ENCODE measurements at regions of chr2 and their contacts with region 1.

Region 1: DNA sequence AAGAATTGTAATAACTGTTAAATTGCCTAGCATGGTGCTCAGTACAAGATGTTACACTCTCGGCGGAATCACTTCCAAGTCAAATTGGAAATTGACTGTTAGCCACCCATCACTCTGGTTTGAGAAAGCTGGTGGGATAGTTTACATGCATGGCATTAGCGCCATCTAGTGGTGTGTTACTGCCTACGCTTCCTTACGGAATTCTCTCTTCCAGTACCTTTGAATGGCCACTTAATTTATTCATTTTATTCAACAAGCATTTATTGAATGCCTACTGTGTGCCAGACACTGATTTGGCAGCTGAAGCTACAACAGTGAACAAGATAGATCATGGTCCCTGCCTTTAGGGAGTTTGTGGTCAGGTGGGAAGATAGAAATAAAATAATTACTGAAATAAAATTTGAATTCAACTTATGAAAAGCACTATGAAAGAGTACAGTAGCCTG is 171.2 kb downstream of the TMEM247 start:
- DNase-seq: peak; percentile 14 to 80 (median 69)
- ATAC-seq: peak; percentile 90
- H3K4me3 ChIP-seq: no peak overlapping the region
- H3K4me3 Mint-ChIP-seq: no peak overlapping the region
- H3K27ac ChIP-seq: no peak overlapping the region
- H3K27ac Mint-ChIP-seq: peak overlapping the region in 1 of 9 donors; percentile 36
- H3K4me1 ChIP-seq: no peaks in the 10 kb centered on the region
- H3K4me1 Mint-ChIP-seq: no peaks in the 10 kb centered on the region
- H3K27me3 ChIP-seq: no peaks in the 10 kb centered on the region
- H3K27me3 Mint-ChIP-seq: peaks cover 0 to 15% (median 0%) of the 10 kb centered on the region in 5 donors

Region 2: GRCh38 chr2:46010925-46011490 is 639.6 kb before region 1 on chr2:
- CTCF ChIA-PET with region 1: no interaction called
- POLR2A ChIA-PET with region 1: no interaction called
- intact Hi-C with region 1: loop called (anchors 5 kb)
- DNase-seq: peak in 6 of 9 donors; percentile 10 to 38 (median 26)
- ATAC-seq: no peak
- H3K4me3 ChIP-seq: no peak overlapping the region
- H3K4me3 Mint-ChIP-seq: no peak overlapping the region
- H3K27ac ChIP-seq: no peak overlapping the region
- H3K27ac Mint-ChIP-seq: no peak overlapping the region
- H3K4me1 ChIP-seq: no peaks in the 10 kb centered on the region
- H3K4me1 Mint-ChIP-seq: peaks cover 0 to 16% (median 0%) of the 10 kb centered on the region in 7 donors
- H3K27me3 ChIP-seq: no peaks in the 10 kb centered on the region
- H3K27me3 Mint-ChIP-seq: no peaks in the 10 kb centered on the region

Region 3: DNA sequence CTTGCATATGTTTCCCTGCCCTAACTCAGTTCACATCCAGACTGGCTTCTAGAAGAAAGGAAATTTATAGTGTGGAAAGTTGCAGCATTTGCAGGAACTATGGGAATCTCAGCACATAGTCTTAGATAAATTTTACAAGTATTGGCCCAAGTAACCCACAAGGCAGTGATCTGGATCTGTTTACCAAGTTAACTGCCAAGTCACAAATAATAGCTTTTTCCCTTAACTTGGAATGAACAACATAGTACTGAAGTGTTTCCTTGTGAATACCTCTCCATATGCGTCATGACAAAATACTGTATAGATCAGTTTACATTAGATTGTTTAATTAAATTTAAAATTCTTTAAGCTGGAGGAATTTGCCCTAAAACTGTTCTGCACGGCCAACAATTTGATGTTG is 609.1 kb before region 1 on chr2:
- CTCF ChIA-PET with region 1: no interaction called
- POLR2A ChIA-PET with region 1: no interaction called
- intact Hi-C with region 1: no loop called
- DNase-seq: no peak
- ATAC-seq: no peak
- H3K4me3 ChIP-seq: no peak overlapping the region
- H3K4me3 Mint-ChIP-seq: no peak overlapping the region
- H3K27ac ChIP-seq: no peak overlapping the region
- H3K27ac Mint-ChIP-seq: no peak overlapping the region
- H3K4me1 ChIP-seq: no peaks in the 10 kb centered on the region
- H3K4me1 Mint-ChIP-seq: peaks cover 0 to 5% (median 0%) of the 10 kb centered on the region in 7 donors
- H3K27me3 ChIP-seq: no peaks in the 10 kb centered on the region
- H3K27me3 Mint-ChIP-seq: no peaks in the 10 kb centered on the region

Region 4: GRCh38 chr2:46377176-46377581 is 273.4 kb before region 1 on chr2:
- CTCF ChIA-PET with region 1: no interaction called
- POLR2A ChIA-PET with region 1: no interaction called
- intact Hi-C with region 1: no loop called
- DNase-seq: peak in 1 of 9 donors; percentile 3
- ATAC-seq: no peak
- H3K4me3 ChIP-seq: no peak overlapping the region
- H3K4me3 Mint-ChIP-seq: no peak overlapping the region
- H3K27ac ChIP-seq: no peak overlapping the region
- H3K27ac Mint-ChIP-seq: no peak overlapping the region
- H3K4me1 ChIP-seq: no peaks in the 10 kb centered on the region
- H3K4me1 Mint-ChIP-seq: no peaks in the 10 kb centered on the region
- H3K27me3 ChIP-seq: no peaks in the 10 kb centered on the region
- H3K27me3 Mint-ChIP-seq: no peaks in the 10 kb centered on the region

Region 5: DNA sequence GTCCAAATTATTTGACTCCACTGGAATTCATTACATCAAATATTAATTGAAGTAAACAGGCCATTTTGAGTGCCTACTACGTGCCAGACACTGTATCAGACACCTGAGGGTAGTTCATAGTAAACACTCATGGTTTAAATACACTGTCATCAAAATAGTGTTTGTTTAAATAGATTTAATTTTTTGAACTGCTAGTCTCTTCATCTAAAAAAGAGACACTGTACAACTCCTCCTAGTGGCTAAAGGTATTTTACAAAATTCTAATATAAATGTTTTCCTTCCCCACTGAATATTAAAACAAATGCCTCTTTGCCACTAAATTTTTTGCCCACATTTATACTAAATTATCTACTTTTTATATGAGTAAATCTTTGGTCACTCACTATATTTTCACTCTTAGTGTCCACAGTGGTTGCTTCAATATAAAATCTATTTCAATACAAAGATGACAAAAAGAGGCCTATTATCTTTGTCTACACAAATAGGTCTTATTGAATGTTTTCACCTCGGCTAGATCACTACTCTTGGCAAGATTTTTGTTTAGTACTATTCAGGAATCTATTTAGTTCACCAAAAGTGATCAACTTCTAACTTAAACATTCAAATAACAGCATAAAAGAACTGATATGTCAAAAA is 49.1 kb before region 1 on chr2:
- CTCF ChIA-PET with region 1: interaction called, 4 read pairs
- POLR2A ChIA-PET with region 1: interaction called, 3 read pairs
- intact Hi-C with region 1: loop called (anchors 1 to 2 kb)
- DNase-seq: peak in 4 of 9 donors; percentile 7 to 26 (median 14)
- ATAC-seq: no peak
- H3K4me3 ChIP-seq: no peak overlapping the region
- H3K4me3 Mint-ChIP-seq: no peak overlapping the region
- H3K27ac ChIP-seq: no peak overlapping the region
- H3K27ac Mint-ChIP-seq: no peak overlapping the region
- H3K4me1 ChIP-seq: no peaks in the 10 kb centered on the region
- H3K4me1 Mint-ChIP-seq: peaks cover 0 to 9% (median 4%) of the 10 kb centered on the region in 7 donors
- H3K27me3 ChIP-seq: no peaks in the 10 kb centered on the region
- H3K27me3 Mint-ChIP-seq: no peaks in the 10 kb centered on the region

Region 6: GRCh38 chr2:46887028-46887885 is 236.7 kb after region 1 on chr2:
- CTCF ChIA-PET with region 1: no interaction called
- POLR2A ChIA-PET with region 1: no interaction called
- intact Hi-C with region 1: loop called in 1 of 2 experiments (anchors 1 kb)
- DNase-seq: no peak
- ATAC-seq: no peak
- H3K4me3 ChIP-seq: no peak overlapping the region
- H3K4me3 Mint-ChIP-seq: no peak overlapping the region
- H3K27ac ChIP-seq: no peak overlapping the region
- H3K27ac Mint-ChIP-seq: no peak overlapping the region
- H3K4me1 ChIP-seq: no peaks in the 10 kb centered on the region
- H3K4me1 Mint-ChIP-seq: peaks cover 0 to 2% (median 0%) of the 10 kb centered on the region in 7 donors
- H3K27me3 ChIP-seq: no peaks in the 10 kb centered on the region
- H3K27me3 Mint-ChIP-seq: peaks cover 0 to 31% (median 4%) of the 10 kb centered on the region in 5 donors